ENCODE measurements at regions of chr9 and their contacts with region 1.

Region 1: DNA sequence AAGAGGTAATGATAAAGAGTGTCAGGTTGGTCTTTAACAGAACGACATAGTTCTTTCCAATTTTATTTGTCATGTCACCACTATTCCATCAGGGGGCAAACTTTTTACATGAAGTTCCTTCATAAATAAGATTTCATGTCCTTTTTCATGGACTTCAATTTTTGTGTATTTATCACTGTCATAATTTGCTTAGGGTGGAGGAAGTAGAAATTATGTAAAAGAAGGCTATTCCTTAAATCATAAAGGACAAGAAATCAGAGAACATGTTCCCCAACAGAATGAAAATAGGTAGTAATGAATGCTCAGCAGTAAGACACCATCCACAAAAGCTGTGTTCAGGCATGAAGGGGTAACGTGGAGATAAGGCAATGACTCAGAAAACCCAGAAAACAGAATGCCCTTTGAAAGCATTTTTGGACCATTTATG is 72.7 kb downstream of the ZFAND5 start:
- DNase-seq: peak in 1 of 35 experiments; percentile 52
- ATAC-seq: peak in 1 of 4 experiments; percentile 43
- H3K4me3 ChIP-seq: no peak overlapping the region
- H3K4me3 Mint-ChIP-seq: no peak overlapping the region
- H3K27ac ChIP-seq: no peak overlapping the region
- H3K27ac Mint-ChIP-seq: no peak overlapping the region
- H3K4me1 ChIP-seq: no peaks in the 10 kb centered on the region
- H3K4me1 Mint-ChIP-seq: peaks cover 0 to 5% (median 0%) of the 10 kb centered on the region in 3 donors
- H3K27me3 ChIP-seq: no peaks in the 10 kb centered on the region
- H3K27me3 Mint-ChIP-seq: peaks cover 3 to 7% of the 10 kb centered on the region in 2 donors

Region 2: GRCh38 chr9:71758785-71759184 is 533.5 kb before region 1 on chr9:
- CTCF ChIA-PET with region 1: no interaction called
- POLR2A ChIA-PET with region 1: no interaction called
- DNase-seq: peak in 1 of 35 experiments; percentile 44
- ATAC-seq: peak in 2 of 4 experiments; percentile 26 to 55
- H3K4me3 ChIP-seq: no peak overlapping the region
- H3K4me3 Mint-ChIP-seq: no peak overlapping the region
- H3K27ac ChIP-seq: no peak overlapping the region
- H3K27ac Mint-ChIP-seq: no peak overlapping the region
- H3K4me1 ChIP-seq: peaks cover 24 to 47% of the 10 kb centered on the region in 2 experiments
- H3K4me1 Mint-ChIP-seq: peaks cover 81 to 86% (median 85%) of the 10 kb centered on the region in 3 donors
- H3K27me3 ChIP-seq: no peaks in the 10 kb centered on the region
- H3K27me3 Mint-ChIP-seq: no peaks in the 10 kb centered on the region

Region 3: DNA sequence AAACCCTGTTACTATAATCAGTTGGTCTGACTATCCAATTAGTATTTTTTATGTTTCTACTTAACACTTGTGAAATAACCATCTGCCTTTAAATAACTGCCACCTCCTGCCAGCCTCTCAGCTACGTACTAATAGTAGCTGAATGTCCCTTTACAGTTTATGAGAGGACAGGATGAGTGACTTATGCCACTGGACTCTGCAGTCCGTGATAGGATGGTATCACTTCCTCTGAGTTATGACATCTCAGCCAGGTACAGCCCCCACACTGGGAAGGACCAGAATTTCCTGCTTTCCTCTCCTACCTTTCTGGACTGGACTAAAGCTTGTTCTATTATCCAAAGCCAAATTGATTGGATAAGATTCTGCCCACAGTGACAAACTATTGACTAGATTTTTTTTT is 30.2 kb before region 1 on chr9:
- CTCF ChIA-PET with region 1: no interaction called
- POLR2A ChIA-PET with region 1: no interaction called
- DNase-seq: no peak
- ATAC-seq: no peak
- H3K4me3 ChIP-seq: no peak overlapping the region
- H3K4me3 Mint-ChIP-seq: no peak overlapping the region
- H3K27ac ChIP-seq: no peak overlapping the region
- H3K27ac Mint-ChIP-seq: no peak overlapping the region
- H3K4me1 ChIP-seq: no peaks in the 10 kb centered on the region
- H3K4me1 Mint-ChIP-seq: no peaks in the 10 kb centered on the region
- H3K27me3 ChIP-seq: peaks cover 0 to 21% of the 10 kb centered on the region in 2 experiments
- H3K27me3 Mint-ChIP-seq: peaks cover 27 to 31% of the 10 kb centered on the region in 2 donors

Region 4: DNA sequence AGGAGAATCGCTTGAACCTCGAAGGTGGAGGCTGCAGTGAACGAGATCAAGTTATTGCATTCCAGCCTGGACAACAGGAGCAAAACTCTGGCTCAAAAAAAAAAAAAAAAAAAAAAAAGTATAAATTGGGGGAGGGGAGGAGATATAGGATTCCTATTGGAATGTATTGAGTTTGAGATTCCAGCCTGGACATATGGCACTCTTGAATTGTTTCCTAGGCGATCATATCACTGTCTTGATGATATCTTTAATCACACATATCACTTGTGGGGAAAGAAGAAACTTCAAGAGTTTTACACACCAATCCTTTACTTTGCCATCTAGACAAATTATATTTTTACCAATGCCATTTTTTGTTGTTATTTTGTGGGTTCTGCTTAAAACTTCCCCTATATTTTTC is 271.5 kb after region 1 on chr9:
- CTCF ChIA-PET with region 1: interaction called in 1 of 2 experiments, 16 read pairs
- POLR2A ChIA-PET with region 1: no interaction called
- DNase-seq: no peak
- ATAC-seq: no peak
- H3K4me3 ChIP-seq: no peak overlapping the region
- H3K4me3 Mint-ChIP-seq: no peak overlapping the region
- H3K27ac ChIP-seq: no peak overlapping the region
- H3K27ac Mint-ChIP-seq: no peak overlapping the region
- H3K4me1 ChIP-seq: no peaks in the 10 kb centered on the region
- H3K4me1 Mint-ChIP-seq: no peaks in the 10 kb centered on the region
- H3K27me3 ChIP-seq: no peaks in the 10 kb centered on the region
- H3K27me3 Mint-ChIP-seq: no peaks in the 10 kb centered on the region